Endothelial cell of umbilical vein (primary cell): ENCODE measurements at regions of chr1 and their contacts with region 1.

Region 1: DNA sequence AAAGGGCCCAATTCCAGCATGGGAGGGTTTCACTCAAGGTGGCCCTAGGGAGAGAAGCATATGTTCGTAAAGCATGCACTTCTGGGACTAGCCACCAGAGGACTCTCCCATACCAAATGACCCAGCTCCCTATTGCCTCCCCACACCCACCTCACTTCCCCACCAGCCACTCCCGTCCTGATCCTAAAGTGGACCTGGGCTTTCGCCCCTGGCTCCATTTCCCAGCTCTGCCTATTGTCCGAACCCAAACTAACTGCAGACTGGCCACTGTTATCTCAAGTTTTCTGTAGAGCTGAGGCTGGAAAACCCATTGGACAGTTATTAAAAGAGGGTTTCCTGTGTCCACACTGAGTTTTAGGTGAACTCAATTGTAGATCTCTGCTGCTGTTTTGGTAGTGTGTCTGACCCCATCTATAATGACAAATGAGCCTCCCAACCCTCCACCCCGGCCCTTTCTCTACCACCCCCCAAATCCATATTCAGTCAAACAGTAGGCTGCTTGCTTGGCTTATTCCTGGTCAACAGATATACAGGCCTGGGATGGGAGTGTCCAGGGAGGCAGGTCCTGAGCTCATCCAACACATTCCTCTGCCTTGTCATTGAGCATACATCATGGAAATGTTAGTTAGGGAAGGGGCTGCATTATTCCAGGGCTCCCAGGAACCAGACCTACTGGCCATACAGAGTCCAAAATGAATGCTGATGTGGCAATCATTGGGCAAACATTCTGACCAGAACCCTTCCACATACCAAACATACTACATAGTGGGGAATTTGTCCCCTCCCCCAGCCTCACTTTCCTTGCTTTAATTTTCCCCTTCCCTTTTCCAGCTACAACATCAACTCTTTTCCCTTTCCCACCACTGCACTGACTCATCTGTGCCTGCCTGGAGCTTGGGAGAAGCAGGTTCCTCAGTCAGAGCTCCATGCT is 59.2 kb downstream of the ABCA4 start:
- DNase-seq: peak; percentile 86
- H3K4me3 ChIP-seq: no peak overlapping the region
- H3K27ac ChIP-seq: peak overlapping the region; percentile 76
- H3K4me1 ChIP-seq: peaks cover 48% of the 10 kb centered on the region
- H3K27me3 ChIP-seq: no peaks in the 10 kb centered on the region
- CTCF ChIP-seq: peak; percentile 92 to 93
- POLR2A ChIP-seq: peak; percentile 36

Region 2: GRCh38 chr1:94025383-94026340 is 36.1 kb before region 1 on chr1:
- CTCF ChIA-PET with region 1: interaction called, 30 read pairs
- POLR2A ChIA-PET with region 1: no interaction called
- dilution Hi-C with region 1: no loop called
- intact Hi-C with region 1: loop called (anchors 1 kb)
- DNase-seq: peak; percentile 83
- H3K4me3 ChIP-seq: no peak overlapping the region
- H3K27ac ChIP-seq: no peak overlapping the region
- H3K4me1 ChIP-seq: peaks cover 25% of the 10 kb centered on the region
- H3K27me3 ChIP-seq: no peaks in the 10 kb centered on the region
- CTCF ChIP-seq: peak; percentile 53 to 73
- POLR2A ChIP-seq: no peak

Region 3: DNA sequence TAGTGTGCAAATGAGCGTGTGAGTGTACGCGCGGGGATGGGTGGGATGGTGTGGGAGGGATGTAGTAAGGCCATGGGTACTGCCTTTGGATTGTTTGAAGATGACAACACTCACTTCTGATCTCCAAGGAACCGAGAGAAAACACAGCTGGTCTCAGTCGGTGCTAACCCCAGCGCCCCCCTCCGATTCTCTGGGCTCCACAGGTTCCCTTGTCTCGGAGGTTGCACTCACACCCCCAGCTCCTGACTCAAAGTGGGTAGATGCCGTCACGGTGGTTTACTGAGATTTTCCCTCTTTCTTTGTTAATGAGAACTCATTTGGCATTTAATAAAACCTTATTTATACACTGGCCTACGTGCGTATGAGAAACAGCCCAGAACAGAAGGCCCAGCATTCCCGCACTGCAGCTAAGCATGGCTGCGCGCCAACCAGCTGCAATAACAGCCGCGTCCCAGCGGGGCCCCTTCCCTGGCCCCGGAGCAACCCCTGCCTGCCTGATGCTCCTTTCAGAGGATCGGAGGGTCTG is 33.4 kb after region 1 on chr1:
- CTCF ChIA-PET with region 1: interaction called, 38 read pairs
- POLR2A ChIA-PET with region 1: interaction called, 3 read pairs
- dilution Hi-C with region 1: no loop called
- intact Hi-C with region 1: no loop called
- DNase-seq: peak; percentile 97
- H3K4me3 ChIP-seq: no peak overlapping the region
- H3K27ac ChIP-seq: peak overlapping the region; percentile 91
- H3K4me1 ChIP-seq: peaks cover 56% of the 10 kb centered on the region
- H3K27me3 ChIP-seq: no peaks in the 10 kb centered on the region
- CTCF ChIP-seq: no peak
- POLR2A ChIP-seq: peak; percentile 5

Region 4: GRCh38 chr1:94160811-94161210 is 99.0 kb after region 1 on chr1:
- CTCF ChIA-PET with region 1: interaction called, 26 read pairs
- POLR2A ChIA-PET with region 1: no interaction called
- dilution Hi-C with region 1: no loop called
- intact Hi-C with region 1: loop called (anchors 1 kb)
- DNase-seq: peak; percentile 76
- H3K4me3 ChIP-seq: no peak overlapping the region
- H3K27ac ChIP-seq: peak overlapping the region; percentile 23
- H3K4me1 ChIP-seq: peaks cover 5% of the 10 kb centered on the region
- H3K27me3 ChIP-seq: no peaks in the 10 kb centered on the region
- CTCF ChIP-seq: no peak
- POLR2A ChIP-seq: no peak

Region 5: DNA sequence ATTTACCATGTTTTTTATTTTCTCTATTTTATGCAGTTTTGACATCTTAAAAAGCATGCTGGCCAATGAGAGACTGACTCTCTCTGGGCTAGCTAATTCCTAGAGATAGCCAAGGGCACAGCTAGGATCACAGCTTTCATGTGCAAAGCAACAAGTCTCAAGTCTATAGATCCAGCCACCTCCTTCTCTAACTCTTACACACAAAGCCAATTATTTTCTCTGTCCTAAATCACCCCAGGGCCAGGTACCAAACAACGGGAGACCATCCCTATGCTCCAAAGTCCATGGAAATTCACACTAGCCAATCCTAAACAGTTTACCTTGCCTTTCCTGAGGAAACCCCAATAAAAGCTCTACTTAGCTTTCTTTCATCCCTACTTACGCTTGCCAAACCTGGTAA is 137.6 kb after region 1 on chr1:
- CTCF ChIA-PET with region 1: interaction called, 24 read pairs
- POLR2A ChIA-PET with region 1: no interaction called
- dilution Hi-C with region 1: no loop called
- intact Hi-C with region 1: no loop called
- DNase-seq: no peak
- H3K4me3 ChIP-seq: no peak overlapping the region
- H3K27ac ChIP-seq: no peak overlapping the region
- H3K4me1 ChIP-seq: peaks cover 7% of the 10 kb centered on the region
- H3K27me3 ChIP-seq: no peaks in the 10 kb centered on the region
- CTCF ChIP-seq: no peak
- POLR2A ChIP-seq: peak; percentile 27

Region 6: DNA sequence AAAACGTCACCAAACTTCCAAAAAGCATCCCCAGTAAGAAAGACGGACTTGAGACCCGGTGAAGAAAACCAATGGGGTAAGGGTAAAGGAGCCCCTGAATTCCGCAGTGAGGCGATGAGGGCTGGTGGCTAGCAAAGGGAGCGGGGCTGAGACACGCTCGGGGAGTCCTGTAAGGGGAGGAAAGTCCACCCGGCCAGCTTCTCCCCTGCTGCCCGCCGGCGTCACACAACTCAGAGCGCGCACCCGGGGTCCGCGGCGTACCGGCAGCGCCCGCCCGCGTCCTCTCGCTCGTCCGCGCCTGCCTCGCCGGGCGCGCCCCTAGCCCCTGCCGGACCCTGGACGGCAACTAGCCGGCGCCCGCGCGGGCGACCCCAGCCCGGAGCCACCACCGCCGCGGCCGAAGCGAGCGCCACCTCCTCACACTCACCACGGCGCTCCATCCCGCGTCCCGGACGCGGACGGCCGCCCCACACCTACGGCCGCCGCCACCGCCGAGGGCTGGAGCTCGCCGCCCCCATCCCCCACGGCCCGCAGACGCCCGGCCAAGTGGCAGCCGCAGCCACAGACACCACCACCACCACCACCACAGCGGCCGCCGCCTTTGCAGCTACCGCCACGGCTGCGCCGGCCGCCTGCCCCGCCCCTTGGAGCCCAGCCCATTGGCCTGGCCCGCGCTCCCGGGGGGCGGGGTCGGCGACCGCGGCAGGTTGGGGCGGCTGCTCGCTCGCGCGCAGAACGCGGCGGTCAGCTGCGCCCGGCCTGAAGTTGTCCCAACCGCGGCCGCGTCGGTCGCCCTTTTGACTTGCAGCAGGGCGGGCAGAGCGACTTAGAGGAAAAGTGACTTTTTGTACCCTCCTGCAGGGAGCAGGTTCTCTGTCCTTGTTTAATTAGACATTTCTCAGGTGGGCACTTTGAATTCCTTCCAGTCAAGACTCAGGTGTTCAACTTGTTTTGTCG is 185.6 kb after region 1 on chr1:
- CTCF ChIA-PET with region 1: interaction called, 17 read pairs
- POLR2A ChIA-PET with region 1: no interaction called
- dilution Hi-C with region 1: no loop called
- intact Hi-C with region 1: no loop called
- DNase-seq: peak; percentile 80
- H3K4me3 ChIP-seq: peak overlapping the region; percentile 58 to 98 (median 75)
- H3K27ac ChIP-seq: peak overlapping the region; percentile 90
- H3K4me1 ChIP-seq: peaks cover 23% of the 10 kb centered on the region
- H3K27me3 ChIP-seq: no peaks in the 10 kb centered on the region
- CTCF ChIP-seq: no peak
- POLR2A ChIP-seq: peak; percentile 95

Region 7: GRCh38 chr1:95146637-95147036 is 1084.9 kb after region 1 on chr1:
- CTCF ChIA-PET with region 1: no interaction called
- POLR2A ChIA-PET with region 1: no interaction called
- dilution Hi-C with region 1: no loop called
- intact Hi-C with region 1: no loop called
- DNase-seq: no peak
- H3K4me3 ChIP-seq: no peak overlapping the region
- H3K27ac ChIP-seq: no peak overlapping the region
- H3K4me1 ChIP-seq: no peaks in the 10 kb centered on the region
- H3K27me3 ChIP-seq: no peaks in the 10 kb centered on the region
- CTCF ChIP-seq: no peak
- POLR2A ChIP-seq: no peak